ENCODE measurements at regions of chr13 and their contacts with region 1.

Region 1: GRCh38 chr13:107373551-107373950 is 805.6 kb upstream of the ARGLU1 start:
- DNase-seq: peak; percentile 91
- ATAC-seq: peak; percentile 50
- H3K4me3 ChIP-seq: no peak overlapping the region
- H3K27ac ChIP-seq: peak overlapping the region; percentile 73
- H3K4me1 ChIP-seq: peaks cover 18% of the 10 kb centered on the region
- H3K27me3 ChIP-seq: no peaks in the 10 kb centered on the region
- CTCF ChIP-seq: peak; percentile 84
- POLR2A ChIP-seq: no peak
- RAD21 ChIP-seq: peak; percentile 76

Region 2: DNA sequence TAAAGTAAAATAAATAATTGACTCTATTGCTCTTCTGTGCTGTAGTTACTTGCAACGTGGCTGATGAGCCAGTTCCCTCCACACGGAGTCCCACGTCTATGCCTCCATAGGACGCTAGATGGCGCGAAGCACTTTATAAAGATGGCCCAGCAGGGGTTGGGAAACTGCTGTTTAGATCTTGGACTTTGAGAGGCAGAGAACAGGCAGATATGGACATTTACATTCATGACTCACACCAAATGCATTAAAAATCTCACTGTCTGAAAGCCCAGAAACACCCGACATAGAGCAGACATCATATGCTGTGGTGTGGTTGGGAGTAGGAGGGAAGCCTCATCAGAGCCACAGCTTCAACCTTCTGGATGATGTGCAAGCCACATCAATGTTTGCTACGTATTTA is 162.5 kb before region 1 on chr13:
- CTCF ChIA-PET with region 1: interaction called, 5 read pairs
- POLR2A ChIA-PET with region 1: no interaction called
- dilution Hi-C with region 1: no loop called
- in situ Hi-C with region 1: no loop called
- intact Hi-C with region 1: loop called (anchors 1 kb)
- DNase-seq: peak; percentile 97
- ATAC-seq: peak; percentile 97
- H3K4me3 ChIP-seq: no peak overlapping the region
- H3K27ac ChIP-seq: no peak overlapping the region
- H3K4me1 ChIP-seq: peaks cover 5% of the 10 kb centered on the region
- H3K27me3 ChIP-seq: no peaks in the 10 kb centered on the region
- CTCF ChIP-seq: peak; percentile 98
- POLR2A ChIP-seq: no peak
- RAD21 ChIP-seq: peak; percentile 94

Region 3: DNA sequence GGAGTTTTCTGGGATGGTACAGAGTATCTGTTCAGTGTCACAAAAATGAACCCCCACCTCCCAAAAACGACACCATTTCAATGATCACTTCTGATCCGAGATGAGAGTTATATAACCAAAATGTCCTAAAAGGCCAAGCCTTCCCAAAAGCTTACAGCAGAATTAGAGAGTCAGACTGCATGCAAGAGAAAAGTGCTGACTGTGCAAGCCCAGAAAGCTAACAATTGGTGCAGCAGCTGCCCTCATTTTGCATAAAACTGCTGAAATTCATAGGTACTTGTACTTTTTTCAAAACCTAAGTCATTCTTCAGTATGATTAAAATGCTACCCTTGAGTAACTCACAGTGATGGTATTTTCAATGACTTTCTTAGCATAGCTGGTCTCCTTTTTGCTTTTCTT is 14.0 kb after region 1 on chr13:
- CTCF ChIA-PET with region 1: no interaction called
- POLR2A ChIA-PET with region 1: no interaction called
- dilution Hi-C with region 1: no loop called
- in situ Hi-C with region 1: no loop called
- intact Hi-C with region 1: no loop called
- DNase-seq: no peak
- ATAC-seq: no peak
- H3K4me3 ChIP-seq: no peak overlapping the region
- H3K27ac ChIP-seq: no peak overlapping the region
- H3K4me1 ChIP-seq: peaks cover 2% of the 10 kb centered on the region
- H3K27me3 ChIP-seq: no peaks in the 10 kb centered on the region
- CTCF ChIP-seq: no peak
- POLR2A ChIP-seq: no peak
- RAD21 ChIP-seq: no peak

Region 4: GRCh38 chr13:107450931-107451330 is 77.4 kb after region 1 on chr13:
- CTCF ChIA-PET with region 1: no interaction called
- POLR2A ChIA-PET with region 1: no interaction called
- dilution Hi-C with region 1: no loop called
- in situ Hi-C with region 1: no loop called
- intact Hi-C with region 1: loop called (anchors 2 kb)
- DNase-seq: peak; percentile 99
- ATAC-seq: peak; percentile 95
- H3K4me3 ChIP-seq: no peak overlapping the region
- H3K27ac ChIP-seq: peak overlapping the region; percentile 50
- H3K4me1 ChIP-seq: peaks cover 16% of the 10 kb centered on the region
- H3K27me3 ChIP-seq: no peaks in the 10 kb centered on the region
- CTCF ChIP-seq: no peak
- POLR2A ChIP-seq: no peak
- RAD21 ChIP-seq: peak; percentile 29; the same call in 1 of the 2 replicates

Region 5: GRCh38 chr13:107650081-107650701 is 276.6 kb after region 1 on chr13:
- CTCF ChIA-PET with region 1: interaction called, 12 read pairs
- POLR2A ChIA-PET with region 1: no interaction called
- dilution Hi-C with region 1: no loop called
- in situ Hi-C with region 1: loop called (anchors 10 kb)
- intact Hi-C with region 1: loop called (anchors 2 kb)
- DNase-seq: peak; percentile 62
- ATAC-seq: peak; percentile 60
- H3K4me3 ChIP-seq: no peak overlapping the region
- H3K27ac ChIP-seq: no peak overlapping the region
- H3K4me1 ChIP-seq: no peaks in the 10 kb centered on the region
- H3K27me3 ChIP-seq: no peaks in the 10 kb centered on the region
- CTCF ChIP-seq: peak; percentile 94
- POLR2A ChIP-seq: no peak
- RAD21 ChIP-seq: peak; percentile 80

Region 6: DNA sequence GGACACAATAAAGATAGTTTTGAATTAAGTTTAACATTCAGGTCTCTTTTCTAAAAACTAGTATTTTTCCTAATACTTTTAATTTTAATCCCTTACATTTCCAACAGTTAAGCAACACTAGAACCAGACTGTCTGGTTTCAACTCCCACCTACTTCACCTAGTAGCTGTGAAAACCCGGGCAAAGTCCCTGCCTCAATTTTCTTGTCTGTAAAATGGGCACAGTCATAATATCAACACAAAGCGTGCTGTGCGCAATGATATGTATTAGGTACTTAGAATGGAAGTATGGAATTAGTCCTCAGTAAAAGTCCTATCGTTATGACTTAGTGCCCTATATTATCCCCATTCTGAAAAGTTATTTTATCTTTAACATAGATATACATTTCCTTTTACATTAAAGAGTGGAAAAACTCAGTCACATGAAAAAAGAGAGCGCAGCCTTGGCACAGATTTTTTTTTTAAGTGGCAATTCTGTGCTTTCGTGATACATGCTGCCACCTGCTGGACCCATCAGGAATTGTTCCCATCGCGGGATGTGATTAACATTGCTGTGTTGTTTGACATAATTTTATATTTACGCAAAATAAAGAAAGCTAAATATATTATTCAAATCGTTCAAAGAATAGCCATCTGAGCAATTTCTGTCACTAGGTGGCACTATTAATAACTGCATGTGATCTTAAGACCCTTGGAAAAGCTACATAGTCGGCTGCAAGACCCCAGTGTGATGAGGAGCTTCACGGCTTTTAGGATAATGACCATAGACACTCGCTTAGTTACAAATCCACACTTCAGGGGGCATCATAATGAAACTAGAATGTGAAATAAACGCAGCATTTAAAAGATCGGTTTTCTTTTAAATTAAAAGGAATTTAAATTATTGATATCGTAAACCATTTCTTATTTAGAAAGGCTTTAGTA is 781.9 kb after region 1 on chr13:
- CTCF ChIA-PET with region 1: no interaction called
- POLR2A ChIA-PET with region 1: no interaction called
- dilution Hi-C with region 1: no loop called
- in situ Hi-C with region 1: loop called (anchors 25 kb)
- intact Hi-C with region 1: loop called (anchors 1 kb)
- DNase-seq: peak; percentile 52
- ATAC-seq: peak; percentile 65; the same call in 1 of the 2 replicates
- H3K4me3 ChIP-seq: no peak overlapping the region
- H3K27ac ChIP-seq: no peak overlapping the region
- H3K4me1 ChIP-seq: no peaks in the 10 kb centered on the region
- H3K27me3 ChIP-seq: peaks cover 2% of the 10 kb centered on the region
- CTCF ChIP-seq: peak; percentile 85
- POLR2A ChIP-seq: no peak
- RAD21 ChIP-seq: peak; percentile 78